Posterior cingulate gyrus (tissue), 11 donors: ENCODE measurements at regions of chr9 and their contacts with region 1.

Region 1: GRCh38 chr9:130172161-130172857 is at the start of gene NCS1:
- DNase-seq: peak; percentile 71 to 97 (median 86)

Region 2: DNA sequence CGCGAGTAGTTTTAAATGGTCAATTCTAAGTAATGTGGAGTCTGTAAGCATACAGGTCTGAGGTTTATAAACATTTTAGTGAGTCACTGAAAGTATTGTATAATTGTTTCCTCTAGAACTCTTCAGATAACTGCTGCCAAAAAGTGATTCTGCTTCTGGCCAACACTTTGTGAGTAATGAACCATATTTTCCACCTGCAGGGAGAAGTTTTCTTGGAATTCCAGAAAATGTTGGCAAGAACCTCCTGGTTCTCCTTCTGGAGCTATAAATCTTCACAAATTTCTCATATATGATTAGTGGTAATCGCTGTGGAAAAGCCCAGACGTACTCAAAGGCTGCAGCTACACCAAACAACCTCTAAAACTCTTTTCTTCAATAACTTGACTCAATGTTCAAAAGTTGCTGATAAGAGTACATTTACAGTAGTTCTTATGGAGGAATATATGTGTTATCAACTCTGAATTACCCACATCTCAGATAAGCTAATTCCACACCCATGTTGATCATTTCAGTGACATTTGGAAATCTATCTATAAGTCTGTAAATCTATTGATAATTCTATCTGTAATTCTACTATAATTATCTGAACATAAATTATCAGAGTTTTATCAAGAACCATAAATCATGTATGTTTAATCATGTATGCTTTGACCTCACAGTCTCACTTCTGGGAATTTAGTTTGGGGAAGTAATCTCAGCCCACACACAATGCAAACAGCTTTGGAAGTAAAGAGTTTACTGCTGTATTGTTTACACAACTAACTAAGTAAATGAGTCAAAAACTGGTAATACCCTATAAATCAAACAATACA is 203.4 kb before region 1 on chr9:
- intact Hi-C with region 1: no loop called
- DNase-seq: no peak

Region 3: GRCh38 chr9:130235897-130236668 is 63.8 kb after region 1 on chr9:
- intact Hi-C with region 1: loop called (anchors 1 kb)
- DNase-seq: peak; percentile 56 to 94 (median 72)